ENCODE measurements at regions of chr19 and their contacts with region 1.

Region 1: GRCh38 chr19:1577090-1577928 is 9.2 kb upstream of the MEX3D start:
- DNase-seq: no peak
- ATAC-seq: no peak
- H3K4me3 ChIP-seq: no peak overlapping the region
- H3K27ac ChIP-seq: no peak overlapping the region
- H3K4me1 ChIP-seq: peaks cover 7 to 47% of the 10 kb centered on the region in 2 experiments; a peak in 3 of 5 replicates
- H3K27me3 ChIP-seq: no peaks in the 10 kb centered on the region
- CTCF ChIP-seq: no peak
- EP300 ChIP-seq: no peak
- POLR2A ChIP-seq: no peak
- RAD21 ChIP-seq: no peak

Region 2: DNA sequence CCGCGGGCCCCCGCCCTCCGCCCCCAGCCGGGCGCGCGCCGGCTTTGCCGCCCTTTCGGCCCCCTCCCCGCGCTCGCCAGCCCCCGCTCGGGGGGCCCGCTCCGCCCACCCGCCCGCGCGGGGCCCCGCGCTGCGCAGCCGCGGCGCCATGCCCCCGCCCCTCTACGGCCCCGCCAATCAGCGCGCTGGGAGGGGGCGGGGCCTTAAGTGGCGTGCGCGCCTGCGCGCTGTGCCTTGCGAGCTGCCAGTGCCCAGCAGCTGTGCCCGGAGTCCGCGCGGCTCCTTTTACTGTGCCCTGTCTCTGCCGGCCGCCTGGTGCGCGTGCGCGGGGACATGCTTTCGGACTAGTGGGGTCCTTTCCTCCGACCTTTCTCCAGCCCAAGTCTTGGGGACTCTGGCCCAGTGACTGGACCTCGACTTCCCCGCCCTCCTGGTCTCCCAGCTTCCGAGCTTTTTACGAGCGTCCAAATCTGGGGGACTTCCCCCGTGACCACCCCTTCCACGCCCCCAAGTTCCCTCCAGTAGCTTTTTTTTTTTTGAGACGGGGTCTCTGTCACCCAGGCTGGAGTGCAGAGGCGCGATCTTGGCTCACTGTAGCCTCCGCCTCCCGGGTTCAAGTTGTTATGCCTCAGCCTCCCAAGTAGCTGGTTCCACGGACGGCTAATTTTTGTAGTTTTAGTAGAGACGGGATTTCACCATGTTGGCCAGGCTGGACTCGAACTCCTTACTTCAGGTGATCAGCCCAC is 15.6 kb after region 1 on chr19 and contains the start of gene MBD3:
- CTCF ChIA-PET with region 1: no interaction called
- POLR2A ChIA-PET with region 1: interaction called, 40 read pairs
- in situ Hi-C with region 1: no loop called
- intact Hi-C with region 1: no loop called
- DNase-seq: peak; percentile 91 to 99 (median 98)
- ATAC-seq: peak; percentile 80
- H3K4me3 ChIP-seq: peak within 1 kb of the TSS; percentile 92
- H3K27ac ChIP-seq: peak within 1 kb of the TSS; percentile 95
- H3K4me1 ChIP-seq: peaks cover 15 to 40% of the 10 kb centered on the region in 2 experiments
- H3K27me3 ChIP-seq: no peaks in the 10 kb centered on the region
- CTCF ChIP-seq: no peak
- EP300 ChIP-seq: 0 out of 2 replicates have a peak, but pooled peaks have one; percentile 23
- POLR2A ChIP-seq: peak; percentile 73
- RAD21 ChIP-seq: no peak
- polyA plus RNA-seq, gene MBD3: 0.24 to 0.52 TPM